Endothelial cell of umbilical vein (primary cell): ENCODE measurements at regions of chr15 and their contacts with region 1.

Region 1: GRCh38 chr15:40928821-40929659 is at the start of gene DLL4:
- DNase-seq: peak; percentile 94
- H3K4me3 ChIP-seq: peak within 1 kb of the TSS; percentile 0 to 89 (median 56)
- H3K27ac ChIP-seq: no peak within 1 kb of the TSS
- H3K4me1 ChIP-seq: peaks cover 25% of the 10 kb centered on the region
- H3K27me3 ChIP-seq: peaks cover 14 to 21% of the 10 kb centered on the region in 2 experiments
- CTCF ChIP-seq: peak in 1 of 2 donors; percentile 7
- POLR2A ChIP-seq: peak; percentile 99
- total RNA-seq, gene DLL4: 55.2 and 75.8 TPM in 2 replicates

Region 2: GRCh38 chr15:40914486-40914885 is 14.6 kb before region 1 on chr15:
- CTCF ChIA-PET with region 1: interaction called, 260 read pairs
- POLR2A ChIA-PET with region 1: interaction called, 19 read pairs
- dilution Hi-C with region 1: no loop called
- intact Hi-C with region 1: loop called (anchors 1 kb)
- DNase-seq: no peak
- H3K4me3 ChIP-seq: no peak overlapping the region
- H3K27ac ChIP-seq: peak overlapping the region; percentile 69
- H3K4me1 ChIP-seq: peaks cover 41% of the 10 kb centered on the region
- H3K27me3 ChIP-seq: no peaks in the 10 kb centered on the region
- CTCF ChIP-seq: no peak
- POLR2A ChIP-seq: no peak

Region 3: GRCh38 chr15:40952901-40953712 is 24.1 kb after region 1 on chr15 and contains the start of gene CHAC1:
- CTCF ChIA-PET with region 1: interaction called, 13 read pairs
- POLR2A ChIA-PET with region 1: interaction called, 3 read pairs
- dilution Hi-C with region 1: no loop called
- intact Hi-C with region 1: no loop called
- DNase-seq: peak; percentile 98
- H3K4me3 ChIP-seq: peak within 1 kb of the TSS; percentile 32 to 90 (median 37)
- H3K27ac ChIP-seq: peak within 1 kb of the TSS; percentile 61
- H3K4me1 ChIP-seq: peaks cover 10% of the 10 kb centered on the region
- H3K27me3 ChIP-seq: no peaks in the 10 kb centered on the region
- CTCF ChIP-seq: peak in 1 of 2 donors; percentile 9
- POLR2A ChIP-seq: peak; percentile 77
- total RNA-seq, gene CHAC1: 4.6 and 5.6 TPM in 2 replicates

Region 4: GRCh38 chr15:41180206-41180789 is 251.3 kb after region 1 on chr15:
- CTCF ChIA-PET with region 1: interaction called, 11 read pairs
- POLR2A ChIA-PET with region 1: no interaction called
- dilution Hi-C with region 1: no loop called
- intact Hi-C with region 1: no loop called
- DNase-seq: no peak
- H3K4me3 ChIP-seq: no peak overlapping the region
- H3K27ac ChIP-seq: no peak overlapping the region
- H3K4me1 ChIP-seq: no peaks in the 10 kb centered on the region
- H3K27me3 ChIP-seq: no peaks in the 10 kb centered on the region
- CTCF ChIP-seq: no peak
- POLR2A ChIP-seq: no peak